Activated naive CD4-positive, alpha-beta T cell treated with anti-CD3 and anti-CD28 coated beads for 36 hours (primary cell): ENCODE measurements at regions of chr1 and their contacts with region 1.

Region 1: DNA sequence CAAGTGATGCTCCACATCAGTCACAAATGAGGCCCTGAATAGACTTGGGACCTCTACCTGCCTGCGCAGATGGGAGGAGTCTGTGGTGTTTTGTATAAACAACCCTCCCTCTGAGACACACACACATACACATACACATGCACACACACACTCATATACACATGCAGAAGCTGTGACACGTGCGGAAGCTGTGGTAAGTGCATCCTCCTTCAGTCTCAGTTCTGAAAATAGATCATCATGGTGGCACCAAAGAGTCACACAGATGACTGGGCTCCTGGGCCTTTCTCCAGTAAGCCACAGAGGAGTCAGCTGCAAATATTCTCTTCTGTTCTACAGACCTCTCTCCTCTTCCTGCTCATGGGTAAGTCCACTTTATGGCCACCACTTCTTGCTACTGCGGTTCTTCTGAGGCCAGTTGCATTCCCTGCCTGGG is at the start of gene LY9:
- DNase-seq: peak; percentile 92
- H3K4me3 Mint-ChIP-seq: peak within 1 kb of the TSS; percentile 86
- H3K27ac Mint-ChIP-seq: peak within 1 kb of the TSS; percentile 98
- H3K4me1 Mint-ChIP-seq: peaks cover 50% of the 10 kb centered on the region
- H3K27me3 Mint-ChIP-seq: no peaks in the 10 kb centered on the region
- total RNA-seq, gene LY9: 19.5 to 19.6 TPM

Region 2: GRCh38 chr1:160428655-160429054 is 367.3 kb before region 1 on chr1:
- CTCF ChIA-PET with region 1: no interaction called
- intact Hi-C with region 1: loop called (anchors 5 kb)
- DNase-seq: peak; percentile 66
- H3K4me3 Mint-ChIP-seq: peak overlapping the region; percentile 23
- H3K27ac Mint-ChIP-seq: peak overlapping the region; percentile 88
- H3K4me1 Mint-ChIP-seq: peaks cover 65% of the 10 kb centered on the region
- H3K27me3 Mint-ChIP-seq: no peaks in the 10 kb centered on the region

Region 3: DNA sequence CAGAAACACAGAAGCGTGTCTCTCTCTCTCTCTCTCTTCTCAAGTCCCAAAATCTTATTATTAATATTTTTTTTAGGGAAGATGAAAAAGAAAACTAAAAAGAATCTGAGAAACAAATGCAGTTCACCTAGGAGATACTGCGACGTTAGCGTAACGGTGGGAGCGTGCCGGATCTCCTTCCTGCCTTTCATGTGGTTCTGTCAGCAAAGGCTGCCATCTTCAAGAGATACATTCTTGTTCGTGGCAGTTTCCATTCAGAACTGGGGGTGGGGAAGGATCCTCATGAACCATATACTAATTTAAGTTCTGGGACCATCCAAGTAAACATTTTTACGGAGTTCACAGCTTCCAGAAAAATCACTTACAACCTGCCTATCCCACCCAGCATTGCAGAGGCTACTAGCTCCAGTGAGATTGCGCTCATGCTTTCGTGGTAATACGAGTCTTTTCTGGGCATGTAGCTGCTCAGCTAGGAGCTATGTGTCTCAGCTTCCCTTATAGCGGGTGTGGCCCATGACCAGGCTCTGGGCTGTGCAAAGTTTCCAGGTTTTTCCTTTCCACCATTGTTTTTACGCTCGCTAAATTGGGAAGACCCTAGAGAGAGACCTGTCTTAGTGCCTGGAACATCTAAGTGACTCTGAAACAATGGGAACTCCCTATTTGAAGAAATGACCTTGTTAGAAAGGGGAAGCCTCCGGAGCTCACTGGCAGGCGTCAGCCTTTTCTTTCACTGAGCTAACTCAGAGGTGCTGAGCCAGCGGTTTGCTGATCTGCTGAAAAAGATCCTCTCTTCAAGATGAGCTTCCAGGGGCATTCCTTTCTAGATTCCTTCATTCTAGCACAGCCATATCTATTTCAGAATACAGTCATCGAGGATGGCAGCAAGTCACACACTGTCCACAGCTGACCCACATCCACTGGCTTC is 166.4 kb before region 1 on chr1:
- CTCF ChIA-PET with region 1: no interaction called
- intact Hi-C with region 1: loop called (anchors 1 kb)
- DNase-seq: peak; percentile 91
- H3K4me3 Mint-ChIP-seq: peak overlapping the region; percentile 66
- H3K27ac Mint-ChIP-seq: peak overlapping the region; percentile 96
- H3K4me1 Mint-ChIP-seq: peaks cover 95% of the 10 kb centered on the region
- H3K27me3 Mint-ChIP-seq: no peaks in the 10 kb centered on the region

Region 4: DNA sequence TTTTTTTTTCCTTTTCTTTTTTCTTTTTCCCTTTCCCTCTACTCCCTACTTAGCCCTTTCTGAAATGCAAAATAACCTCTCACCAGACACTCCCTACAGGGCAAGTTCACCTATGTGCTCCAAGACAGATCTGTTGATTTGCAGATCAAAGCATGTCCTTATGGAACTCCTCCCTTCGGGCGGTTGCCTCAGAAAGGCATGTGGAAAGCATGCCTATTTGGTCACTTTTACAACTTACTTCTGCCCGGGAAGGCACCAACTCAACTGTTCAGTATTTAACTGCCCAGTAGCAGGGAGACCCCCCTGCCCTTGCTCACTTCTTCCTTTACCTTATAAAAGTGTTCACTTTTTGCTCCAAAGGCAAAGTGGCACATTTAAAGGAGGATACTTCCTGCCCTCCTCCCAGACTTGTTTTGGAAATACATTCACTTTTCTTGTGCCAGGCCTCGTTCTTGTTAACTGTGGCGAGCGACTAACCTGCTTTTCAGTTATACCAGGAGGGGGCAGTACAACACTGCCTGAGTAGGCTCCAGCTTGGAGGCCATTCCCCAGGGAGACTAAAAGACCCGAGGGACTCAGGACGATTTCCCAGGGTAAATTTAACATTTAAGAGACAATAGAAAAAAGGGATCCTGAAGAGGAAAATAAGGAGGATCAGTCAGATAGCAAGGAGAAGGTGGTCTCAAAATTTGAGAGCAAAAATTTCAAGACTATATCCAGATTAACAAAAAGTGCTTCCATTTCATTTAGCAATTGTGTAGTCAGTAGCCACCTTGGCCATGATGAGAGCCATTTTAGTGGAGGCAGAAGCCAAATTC is 69.3 kb before region 1 on chr1:
- CTCF ChIA-PET with region 1: interaction called, 7 read pairs
- intact Hi-C with region 1: loop called (anchors 1 kb)
- DNase-seq: peak; percentile 81
- H3K4me3 Mint-ChIP-seq: no peak overlapping the region
- H3K27ac Mint-ChIP-seq: no peak overlapping the region
- H3K4me1 Mint-ChIP-seq: peaks cover 34% of the 10 kb centered on the region
- H3K27me3 Mint-ChIP-seq: no peaks in the 10 kb centered on the region

Region 5: GRCh38 chr1:160746836-160747500 is 49.0 kb before region 1 on chr1:
- CTCF ChIA-PET with region 1: no interaction called
- intact Hi-C with region 1: no loop called
- DNase-seq: no peak
- H3K4me3 Mint-ChIP-seq: no peak overlapping the region
- H3K27ac Mint-ChIP-seq: peak overlapping the region; percentile 81
- H3K4me1 Mint-ChIP-seq: peaks cover 94% of the 10 kb centered on the region
- H3K27me3 Mint-ChIP-seq: no peaks in the 10 kb centered on the region

Region 6: GRCh38 chr1:160777486-160778089 is 18.4 kb before region 1 on chr1:
- CTCF ChIA-PET with region 1: interaction called, 115 read pairs
- intact Hi-C with region 1: loop called (anchors 2 kb)
- DNase-seq: peak; percentile 75
- H3K4me3 Mint-ChIP-seq: no peak overlapping the region
- H3K27ac Mint-ChIP-seq: no peak overlapping the region
- H3K4me1 Mint-ChIP-seq: peaks cover 56% of the 10 kb centered on the region
- H3K27me3 Mint-ChIP-seq: no peaks in the 10 kb centered on the region

Region 7: GRCh38 chr1:160818207-160818937 is 22.4 kb after region 1 on chr1:
- CTCF ChIA-PET with region 1: no interaction called
- intact Hi-C with region 1: no loop called
- DNase-seq: no peak
- H3K4me3 Mint-ChIP-seq: no peak overlapping the region
- H3K27ac Mint-ChIP-seq: no peak overlapping the region
- H3K4me1 Mint-ChIP-seq: peaks cover 4% of the 10 kb centered on the region
- H3K27me3 Mint-ChIP-seq: no peaks in the 10 kb centered on the region

Region 8: DNA sequence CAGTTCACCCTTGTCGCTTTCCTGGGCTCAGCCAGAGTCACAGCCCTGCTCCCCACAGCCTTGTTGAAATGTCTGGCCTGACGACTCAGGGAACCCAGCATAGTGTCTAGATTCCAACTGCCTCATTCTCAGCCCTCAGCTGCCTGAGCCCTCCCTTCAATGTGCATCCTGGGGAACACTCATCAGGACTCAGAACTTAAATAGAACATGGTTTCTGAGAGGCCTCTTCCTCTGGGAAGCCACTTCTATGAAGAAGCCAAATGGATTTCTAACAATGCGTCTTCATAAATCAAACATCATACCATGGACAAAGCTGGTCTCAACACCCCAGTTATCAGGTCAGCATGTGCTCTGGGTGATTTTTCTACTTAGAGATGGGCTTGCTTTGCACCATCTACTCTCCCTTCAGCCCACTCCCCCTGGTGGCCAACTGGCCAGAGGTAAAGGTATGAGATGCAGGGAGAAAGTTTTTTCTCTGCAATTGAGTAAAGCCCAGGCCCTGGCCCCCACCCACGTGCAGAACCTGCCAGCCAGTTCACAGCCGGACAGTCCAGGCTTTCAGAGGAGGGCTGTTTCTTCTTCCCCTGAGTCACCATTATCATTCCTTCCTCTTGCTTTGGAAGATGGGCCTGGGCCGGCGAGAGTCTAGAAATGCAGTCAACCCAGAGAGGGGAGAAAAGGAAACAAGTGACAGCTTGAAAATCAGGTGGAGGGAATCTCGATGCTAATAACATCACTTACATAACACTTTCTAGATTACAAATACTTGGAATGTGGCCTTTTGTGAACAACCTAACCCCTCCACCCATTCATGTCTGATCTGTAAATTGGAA is 34.6 kb after region 1 on chr1:
- CTCF ChIA-PET with region 1: interaction called, 60 read pairs
- intact Hi-C with region 1: no loop called
- DNase-seq: peak; percentile 91
- H3K4me3 Mint-ChIP-seq: no peak overlapping the region
- H3K27ac Mint-ChIP-seq: peak overlapping the region; percentile 32
- H3K4me1 Mint-ChIP-seq: peaks cover 18% of the 10 kb centered on the region
- H3K27me3 Mint-ChIP-seq: no peaks in the 10 kb centered on the region